ENCODE measurements at regions of chr14 and their contacts with region 1.

Region 1: DNA sequence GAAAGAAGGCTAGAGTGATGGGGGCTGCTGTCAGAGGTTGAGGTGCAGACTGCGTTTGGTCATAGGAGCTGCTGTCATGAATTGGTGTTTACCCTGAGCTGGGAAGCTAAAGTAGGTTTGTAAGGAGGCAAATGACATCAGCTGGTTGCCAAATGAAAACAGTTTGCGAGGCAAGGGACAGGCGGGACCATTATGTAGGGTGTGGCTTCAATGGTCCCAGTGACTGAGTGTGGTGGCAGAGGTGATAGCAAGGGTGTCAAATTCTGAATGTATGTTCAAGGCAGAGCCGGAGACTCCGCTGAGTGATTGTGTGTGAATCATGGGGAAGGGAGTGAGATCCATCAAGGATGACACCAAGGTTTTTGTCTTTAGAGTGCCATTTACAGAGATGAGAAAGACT is 359.5 kb downstream of the VRK1 start:
- DNase-seq: no peak
- ATAC-seq: no peak
- H3K4me3 ChIP-seq: no peak overlapping the region
- H3K27ac ChIP-seq: no peak overlapping the region
- H3K4me1 ChIP-seq: no peaks in the 10 kb centered on the region
- H3K27me3 ChIP-seq: no peaks in the 10 kb centered on the region
- CTCF ChIP-seq: no peak
- POLR2A ChIP-seq: no peak
- RAD21 ChIP-seq: no peak

Region 2: GRCh38 chr14:95561001-95561412 is 1595.7 kb before region 1 on chr14:
- CTCF ChIA-PET with region 1: no interaction called
- POLR2A ChIA-PET with region 1: no interaction called
- dilution Hi-C with region 1: no loop called
- in situ Hi-C with region 1: no loop called
- intact Hi-C with region 1: no loop called
- DNase-seq: peak; percentile 82
- ATAC-seq: peak; percentile 88
- H3K4me3 ChIP-seq: no peak overlapping the region
- H3K27ac ChIP-seq: no peak overlapping the region
- H3K4me1 ChIP-seq: no peaks in the 10 kb centered on the region
- H3K27me3 ChIP-seq: peaks cover 7% of the 10 kb centered on the region
- CTCF ChIP-seq: peak; percentile 98
- POLR2A ChIP-seq: no peak
- RAD21 ChIP-seq: peak; percentile 96

Region 3: DNA sequence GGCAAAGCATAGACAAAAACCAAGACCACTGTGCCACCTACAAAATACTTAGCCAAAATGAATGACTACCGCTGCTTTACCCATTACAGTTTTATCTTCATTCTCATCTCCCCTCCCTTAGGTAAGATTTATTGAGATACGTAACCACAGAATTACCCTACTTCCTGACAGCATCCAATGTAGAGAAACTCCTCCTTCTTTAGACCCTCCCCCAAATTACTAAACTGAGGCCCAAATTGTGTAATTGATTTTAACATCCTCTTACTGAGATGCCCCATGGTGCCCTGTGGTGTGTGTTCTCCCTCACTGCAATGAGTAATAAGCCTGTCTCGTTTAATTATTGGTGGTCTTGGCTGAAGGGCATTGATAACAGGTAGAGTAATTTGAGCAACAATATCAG is 340.4 kb before region 1 on chr14:
- CTCF ChIA-PET with region 1: no interaction called
- POLR2A ChIA-PET with region 1: no interaction called
- dilution Hi-C with region 1: no loop called
- in situ Hi-C with region 1: no loop called
- intact Hi-C with region 1: loop called (anchors 5 kb)
- DNase-seq: no peak
- ATAC-seq: no peak
- H3K4me3 ChIP-seq: no peak overlapping the region
- H3K27ac ChIP-seq: no peak overlapping the region
- H3K4me1 ChIP-seq: peaks cover 3% of the 10 kb centered on the region; the same call in 1 of the 2 replicates
- H3K27me3 ChIP-seq: no peaks in the 10 kb centered on the region
- CTCF ChIP-seq: no peak
- POLR2A ChIP-seq: no peak
- RAD21 ChIP-seq: no peak

Region 4: GRCh38 chr14:97010491-97011160 is 146.1 kb before region 1 on chr14:
- CTCF ChIA-PET with region 1: no interaction called
- POLR2A ChIA-PET with region 1: no interaction called
- dilution Hi-C with region 1: no loop called
- in situ Hi-C with region 1: no loop called
- intact Hi-C with region 1: no loop called
- DNase-seq: no peak
- ATAC-seq: no peak
- H3K4me3 ChIP-seq: no peak overlapping the region
- H3K27ac ChIP-seq: no peak overlapping the region
- H3K4me1 ChIP-seq: no peaks in the 10 kb centered on the region
- H3K27me3 ChIP-seq: no peaks in the 10 kb centered on the region
- CTCF ChIP-seq: no peak
- POLR2A ChIP-seq: no peak
- RAD21 ChIP-seq: no peak

Region 5: GRCh38 chr14:97544571-97544970 is 387.9 kb after region 1 on chr14:
- CTCF ChIA-PET with region 1: no interaction called
- POLR2A ChIA-PET with region 1: no interaction called
- dilution Hi-C with region 1: no loop called
- in situ Hi-C with region 1: no loop called
- intact Hi-C with region 1: no loop called
- DNase-seq: no peak
- ATAC-seq: no peak
- H3K4me3 ChIP-seq: no peak overlapping the region
- H3K27ac ChIP-seq: no peak overlapping the region
- H3K4me1 ChIP-seq: no peaks in the 10 kb centered on the region
- H3K27me3 ChIP-seq: no peaks in the 10 kb centered on the region
- CTCF ChIP-seq: no peak
- POLR2A ChIP-seq: no peak
- RAD21 ChIP-seq: no peak

Measured in IMR-90 (cell line).